ENCODE measurements at regions of chr15 and their contacts with region 1.

Region 1: GRCh38 chr15:99068186-99068585 is 36.7 kb upstream of the SYNM start:
- DNase-seq: no peak
- ATAC-seq: no peak
- H3K4me3 ChIP-seq: no peak overlapping the region
- H3K27ac ChIP-seq: no peak overlapping the region
- H3K4me1 ChIP-seq: no peaks in the 10 kb centered on the region
- H3K27me3 ChIP-seq: no peaks in the 10 kb centered on the region

Region 2: GRCh38 chr15:98937413-98938104 is 130.6 kb before region 1 on chr15:
- intact Hi-C with region 1: loop called in 1 of 2 experiments (anchors 5 kb)
- DNase-seq: no peak
- ATAC-seq: no peak
- H3K4me3 ChIP-seq: no peak overlapping the region
- H3K27ac ChIP-seq: no peak overlapping the region
- H3K4me1 ChIP-seq: no peaks in the 10 kb centered on the region
- H3K27me3 ChIP-seq: no peaks in the 10 kb centered on the region

Region 3: GRCh38 chr15:99100245-99101173 is 32.3 kb after region 1 on chr15:
- intact Hi-C with region 1: no loop called
- DNase-seq: peak; percentile 86 to 96
- ATAC-seq: peak; percentile 76
- H3K4me3 ChIP-seq: peak overlapping the region; percentile 8 to 38
- H3K27ac ChIP-seq: no peak overlapping the region
- H3K4me1 ChIP-seq: no peaks in the 10 kb centered on the region
- H3K27me3 ChIP-seq: no peaks in the 10 kb centered on the region

Region 4: DNA sequence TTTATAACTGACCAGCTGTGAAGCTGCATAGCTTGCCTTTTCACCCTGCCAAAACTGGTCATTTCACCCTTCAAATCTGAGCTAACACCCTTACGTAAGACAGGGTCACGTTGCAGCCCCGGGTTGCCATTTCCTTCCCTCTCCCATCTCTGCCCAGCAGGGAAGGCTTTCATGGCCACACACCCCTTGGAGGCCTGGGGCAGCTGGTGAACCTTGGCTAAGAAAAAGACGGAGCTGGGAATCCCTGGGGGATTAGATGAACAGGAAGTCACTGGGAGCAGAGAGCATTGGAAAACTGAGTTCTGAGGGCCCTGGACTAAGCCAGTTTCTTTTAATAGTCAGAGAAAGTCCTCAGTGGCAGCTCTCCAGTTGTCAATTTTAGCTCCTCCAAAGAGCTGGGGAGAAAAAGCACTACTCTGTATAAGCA is 113.4 kb after region 1 on chr15:
- intact Hi-C with region 1: no loop called
- DNase-seq: peak in 1 of 2 donors; percentile 80
- ATAC-seq: peak; percentile 86
- H3K4me3 ChIP-seq: no peak overlapping the region
- H3K27ac ChIP-seq: peak overlapping the region; percentile 16 to 91
- H3K4me1 ChIP-seq: no peaks in the 10 kb centered on the region
- H3K27me3 ChIP-seq: no peaks in the 10 kb centered on the region

Measured in aorta (tissue), 5 donors.